Posterior cingulate gyrus (tissue), 11 donors: ENCODE measurements at regions of chr17 and their contacts with region 1.

Region 1: DNA sequence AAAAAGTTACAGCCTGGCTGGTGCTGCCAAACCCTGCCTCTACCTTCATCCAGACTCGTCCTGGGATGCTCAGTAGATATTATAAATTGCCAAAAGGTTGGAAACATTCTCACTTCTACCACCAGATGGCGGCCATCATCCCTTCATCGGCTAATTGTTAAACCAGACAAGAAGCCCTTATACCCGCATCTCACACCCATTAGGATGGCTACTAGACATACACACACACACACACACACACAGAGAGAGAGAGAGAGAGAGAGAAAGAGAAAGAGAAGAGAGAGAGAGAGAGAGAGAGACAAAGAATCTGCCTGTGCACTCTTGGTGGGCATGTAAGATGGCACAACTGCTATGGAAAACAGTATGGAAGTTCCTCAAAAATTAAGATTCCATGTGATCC is 15.0 kb upstream of the SCIMP start:
- DNase-seq: peak in 6 of 10 donors; percentile 38 to 87 (median 60)

Region 2: DNA sequence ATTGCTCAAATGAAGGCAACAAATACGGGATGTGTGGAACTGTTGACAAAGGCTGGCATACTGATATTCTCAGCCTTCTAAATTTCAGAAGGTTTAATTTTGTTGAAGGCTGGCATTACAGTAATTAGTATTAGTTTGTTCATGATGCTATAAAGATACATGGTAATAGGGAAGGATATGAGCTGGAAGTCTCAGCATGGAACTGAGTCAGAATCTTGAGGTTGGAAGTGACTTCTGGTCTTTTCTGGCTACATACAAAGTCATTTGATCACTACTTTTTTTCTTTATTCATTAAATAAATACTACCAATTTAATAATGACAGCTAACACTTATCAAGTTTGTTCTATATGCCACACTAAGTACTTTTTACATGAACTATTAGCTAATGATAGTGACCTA is 55.0 kb after region 1 on chr17:
- intact Hi-C with region 1: loop called (anchors 1 kb)
- DNase-seq: no peak

Region 3: GRCh38 chr17:5694551-5694950 is 444.9 kb after region 1 on chr17:
- intact Hi-C with region 1: no loop called
- DNase-seq: no peak